Activated CD4-positive, alpha-beta memory T cell treated with anti-CD3 and anti-CD28 coated beads, Interleukin-2, amount 10 ng/mL, durations not matched to agents 7 days and 5 days (primary cell): ENCODE measurements at regions of chr6 and their contacts with region 1.

Region 1: DNA sequence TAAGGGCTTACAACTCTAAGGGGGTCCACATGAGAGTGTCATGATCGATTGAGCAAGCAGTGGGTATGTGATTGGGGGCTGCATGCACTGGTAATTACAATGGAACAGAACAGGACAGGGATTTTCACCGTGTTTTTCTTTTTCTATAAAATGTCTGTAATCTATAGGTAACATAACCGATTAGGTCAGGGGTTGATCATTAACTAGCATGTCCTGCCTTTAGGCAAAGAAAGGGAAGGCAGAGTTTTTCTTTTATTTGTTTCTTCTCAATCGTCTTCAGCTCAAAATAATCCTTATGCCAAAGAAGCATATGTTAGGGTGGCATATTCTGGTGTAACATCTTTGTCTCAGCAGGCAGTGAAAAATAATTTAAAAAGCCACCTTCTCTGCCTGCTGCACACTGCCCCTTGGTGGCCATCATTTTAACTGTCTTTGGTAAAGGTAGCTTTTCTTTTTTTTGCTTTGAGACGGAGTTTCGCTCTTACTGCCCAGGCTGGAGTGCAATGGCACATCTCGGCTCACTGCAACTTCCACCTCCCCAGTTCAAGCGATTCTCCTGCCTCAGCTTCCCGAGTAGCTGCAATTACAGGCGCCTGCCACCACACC is 9.7 kb upstream of the CEP43 start:
- DNase-seq: peak; percentile 46
- H3K4me3 Mint-ChIP-seq: no peak overlapping the region
- H3K27ac Mint-ChIP-seq: no peak overlapping the region
- H3K4me1 Mint-ChIP-seq: peaks cover 33% of the 10 kb centered on the region
- H3K27me3 Mint-ChIP-seq: no peaks in the 10 kb centered on the region

Region 2: DNA sequence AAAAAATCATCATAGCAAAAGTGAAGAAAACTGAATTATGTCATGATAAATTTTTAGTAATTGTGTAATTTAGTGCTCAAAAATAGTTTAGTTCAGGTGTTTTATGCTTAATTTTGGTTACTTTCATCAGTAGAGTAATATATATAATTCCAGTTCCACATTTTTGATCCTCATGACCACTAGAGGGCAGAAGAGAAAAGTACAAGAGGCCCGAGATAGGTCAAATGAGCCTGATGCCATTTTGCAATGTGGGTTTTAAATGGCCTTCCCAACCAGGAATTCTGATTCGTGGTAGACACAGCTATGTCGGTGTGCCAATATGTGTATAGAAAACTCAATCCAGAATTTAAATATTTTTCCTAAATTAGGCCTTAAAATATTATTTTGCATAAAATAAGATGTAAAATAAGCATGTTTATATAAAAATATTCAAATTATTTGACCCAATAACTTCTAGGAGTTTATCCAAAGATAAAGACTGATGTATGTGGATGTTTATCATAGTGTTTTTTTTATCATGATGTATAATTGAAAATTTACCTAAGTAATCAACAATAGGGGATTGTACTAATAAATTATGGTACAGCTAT is 202.7 kb before region 1 on chr6:
- CTCF ChIA-PET with region 1: interaction called, 32 read pairs
- POLR2A ChIA-PET with region 1: no interaction called
- DNase-seq: peak; percentile 16
- H3K4me3 Mint-ChIP-seq: no peak overlapping the region
- H3K27ac Mint-ChIP-seq: no peak overlapping the region
- H3K4me1 Mint-ChIP-seq: no peaks in the 10 kb centered on the region
- H3K27me3 Mint-ChIP-seq: peaks cover 5% of the 10 kb centered on the region

Region 3: GRCh38 chr6:166877906-166878305 is 111.6 kb before region 1 on chr6:
- CTCF ChIA-PET with region 1: no interaction called
- POLR2A ChIA-PET with region 1: no interaction called
- DNase-seq: no peak
- H3K4me3 Mint-ChIP-seq: no peak overlapping the region
- H3K27ac Mint-ChIP-seq: no peak overlapping the region
- H3K4me1 Mint-ChIP-seq: no peaks in the 10 kb centered on the region
- H3K27me3 Mint-ChIP-seq: no peaks in the 10 kb centered on the region

Region 4: GRCh38 chr6:166956444-166957086 is 33.0 kb before region 1 on chr6 and contains the start of gene RNASET2:
- CTCF ChIA-PET with region 1: interaction called, 25 read pairs
- POLR2A ChIA-PET with region 1: interaction called, 19 read pairs
- DNase-seq: peak; percentile 99
- H3K4me3 Mint-ChIP-seq: peak within 1 kb of the TSS; percentile 91
- H3K27ac Mint-ChIP-seq: peak within 1 kb of the TSS; percentile 99
- H3K4me1 Mint-ChIP-seq: peaks cover 73% of the 10 kb centered on the region
- H3K27me3 Mint-ChIP-seq: no peaks in the 10 kb centered on the region
- total RNA-seq, gene RNASET2: 107 to 112 TPM

Region 5: GRCh38 chr6:167047554-167047953 is 58.0 kb after region 1 on chr6:
- CTCF ChIA-PET with region 1: interaction called, 14 read pairs
- POLR2A ChIA-PET with region 1: no interaction called
- DNase-seq: peak; percentile 70
- H3K4me3 Mint-ChIP-seq: peak overlapping the region; percentile 34
- H3K27ac Mint-ChIP-seq: peak overlapping the region; percentile 63
- H3K4me1 Mint-ChIP-seq: peaks cover 35% of the 10 kb centered on the region
- H3K27me3 Mint-ChIP-seq: no peaks in the 10 kb centered on the region